ENCODE measurements at regions of chr1 and their contacts with region 1.

Region 1: GRCh38 chr1:25997828-25998761 is at the start of gene PAFAH2:
- DNase-seq: peak; percentile 98
- H3K4me3 ChIP-seq: peak within 1 kb of the TSS; percentile 45 to 59
- H3K27ac ChIP-seq: peak within 1 kb of the TSS; percentile 75 to 79
- H3K4me1 ChIP-seq: no peaks in the 10 kb centered on the region
- H3K27me3 ChIP-seq: no peaks in the 10 kb centered on the region
- CTCF ChIP-seq: peak; percentile 94 to 100 (median 100)
- POLR2A ChIP-seq: peak; percentile 57
- total RNA-seq, gene PAFAH2: 17.4 to 18.7 TPM

Region 2: GRCh38 chr1:25895365-25895993 is 102.6 kb before region 1 on chr1:
- intact Hi-C with region 1: loop called (anchors 1 kb)
- DNase-seq: peak; percentile 77
- H3K4me3 ChIP-seq: no peak overlapping the region
- H3K27ac ChIP-seq: no peak overlapping the region
- H3K4me1 ChIP-seq: peaks cover 3% of the 10 kb centered on the region
- H3K27me3 ChIP-seq: no peaks in the 10 kb centered on the region
- CTCF ChIP-seq: peak; percentile 80 to 98 (median 96)
- POLR2A ChIP-seq: no peak

Region 3: GRCh38 chr1:26555550-26556510 is 557.7 kb after region 1 on chr1:
- intact Hi-C with region 1: no loop called
- DNase-seq: no peak
- H3K4me3 ChIP-seq: no peak overlapping the region
- H3K27ac ChIP-seq: no peak overlapping the region
- H3K4me1 ChIP-seq: no peaks in the 10 kb centered on the region
- H3K27me3 ChIP-seq: no peaks in the 10 kb centered on the region
- CTCF ChIP-seq: no peak
- POLR2A ChIP-seq: no peak